Heart left ventricle (tissue), 16 donors: ENCODE measurements at regions of chr16 and their contacts with region 1.

Region 1: GRCh38 chr16:77963185-77964044 is 58.9 kb upstream of the CLEC3A start:
- DNase-seq: no peak
- ATAC-seq: no peak
- H3K4me3 ChIP-seq: no peak overlapping the region
- H3K27ac ChIP-seq: no peak overlapping the region
- H3K4me1 ChIP-seq: peaks cover 0 to 5% (median 0%) of the 10 kb centered on the region in 12 donors
- H3K27me3 ChIP-seq: peaks cover 0 to 21% (median 0%) of the 10 kb centered on the region in 9 donors
- CTCF ChIP-seq: no peak
- POLR2A ChIP-seq: no peak

Region 2: GRCh38 chr16:77788181-77789084 is 175.0 kb before region 1 on chr16 and contains the start of gene VAT1L:
- intact Hi-C with region 1: loop called in 2 of 10 experiments (anchors 10 kb)
- DNase-seq: peak in 3 of 5 donors; percentile 32 to 34 (median 33)
- ATAC-seq: peak; percentile 52 to 94 (median 88)
- H3K4me3 ChIP-seq: peak within 1 kb of the TSS; percentile 47 to 78 (median 62)
- H3K27ac ChIP-seq: peak within 1 kb of the TSS in 2 of 12 donors; percentile 9 to 22
- H3K4me1 ChIP-seq: peaks cover 0 to 25% (median 7%) of the 10 kb centered on the region in 12 donors
- H3K27me3 ChIP-seq: peaks cover 6 to 66% (median 13%) of the 10 kb centered on the region in 9 donors
- CTCF ChIP-seq: no peak
- POLR2A ChIP-seq: no peak
- total RNA-seq, gene VAT1L: 2.9 to 57.5 (median 14.3) TPM

Region 3: GRCh38 chr16:77801817-77802216 is 161.6 kb before region 1 on chr16:
- intact Hi-C with region 1: loop called in 2 of 10 experiments (anchors 5 to 10 kb)
- DNase-seq: no peak
- ATAC-seq: no peak
- H3K4me3 ChIP-seq: no peak overlapping the region
- H3K27ac ChIP-seq: no peak overlapping the region
- H3K4me1 ChIP-seq: peaks cover 0 to 5% (median 0%) of the 10 kb centered on the region in 12 donors
- H3K27me3 ChIP-seq: peaks cover 0 to 1% (median 0%) of the 10 kb centered on the region in 9 donors
- CTCF ChIP-seq: no peak
- POLR2A ChIP-seq: no peak

Region 4: DNA sequence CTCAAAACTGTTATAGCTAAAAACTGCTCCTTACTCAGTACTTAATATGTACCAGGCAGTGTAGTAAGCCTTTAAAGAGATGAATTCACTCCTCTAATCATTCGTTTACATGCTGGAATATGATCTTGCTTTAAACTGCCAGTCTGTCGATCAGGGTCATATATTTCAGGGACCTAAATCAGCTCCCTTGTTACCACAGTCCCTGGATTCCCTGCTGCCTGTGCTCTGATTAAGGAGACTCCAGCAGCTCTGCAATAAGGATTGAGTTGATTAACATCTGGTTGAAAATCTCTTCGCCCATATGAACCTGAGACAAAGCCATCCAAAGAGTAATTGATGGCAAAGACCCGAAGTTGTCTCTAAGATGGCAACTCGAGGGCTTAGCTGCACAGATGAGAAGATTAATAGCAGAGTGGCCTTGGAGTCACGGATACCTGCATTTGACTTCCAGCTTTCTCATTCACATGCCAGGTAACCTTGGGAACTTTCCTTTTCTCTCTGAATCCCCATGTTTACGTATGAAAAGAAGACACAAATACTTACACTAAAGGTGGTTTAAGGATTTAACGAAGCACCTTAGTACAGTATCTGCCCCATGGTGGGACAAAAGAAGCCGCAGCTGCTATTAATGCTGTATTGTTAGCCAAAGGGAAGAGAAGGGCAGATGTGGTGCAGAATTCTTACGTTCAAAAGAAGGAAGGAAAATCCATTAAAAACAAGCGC is 106.8 kb before region 1 on chr16:
- intact Hi-C with region 1: loop called in 2 of 10 experiments (anchors 2 to 5 kb)
- DNase-seq: no peak
- ATAC-seq: no peak
- H3K4me3 ChIP-seq: no peak overlapping the region
- H3K27ac ChIP-seq: no peak overlapping the region
- H3K4me1 ChIP-seq: peaks cover 0 to 25% (median 7%) of the 10 kb centered on the region in 12 donors
- H3K27me3 ChIP-seq: no peaks in the 10 kb centered on the region
- CTCF ChIP-seq: no peak
- POLR2A ChIP-seq: no peak

Region 5: DNA sequence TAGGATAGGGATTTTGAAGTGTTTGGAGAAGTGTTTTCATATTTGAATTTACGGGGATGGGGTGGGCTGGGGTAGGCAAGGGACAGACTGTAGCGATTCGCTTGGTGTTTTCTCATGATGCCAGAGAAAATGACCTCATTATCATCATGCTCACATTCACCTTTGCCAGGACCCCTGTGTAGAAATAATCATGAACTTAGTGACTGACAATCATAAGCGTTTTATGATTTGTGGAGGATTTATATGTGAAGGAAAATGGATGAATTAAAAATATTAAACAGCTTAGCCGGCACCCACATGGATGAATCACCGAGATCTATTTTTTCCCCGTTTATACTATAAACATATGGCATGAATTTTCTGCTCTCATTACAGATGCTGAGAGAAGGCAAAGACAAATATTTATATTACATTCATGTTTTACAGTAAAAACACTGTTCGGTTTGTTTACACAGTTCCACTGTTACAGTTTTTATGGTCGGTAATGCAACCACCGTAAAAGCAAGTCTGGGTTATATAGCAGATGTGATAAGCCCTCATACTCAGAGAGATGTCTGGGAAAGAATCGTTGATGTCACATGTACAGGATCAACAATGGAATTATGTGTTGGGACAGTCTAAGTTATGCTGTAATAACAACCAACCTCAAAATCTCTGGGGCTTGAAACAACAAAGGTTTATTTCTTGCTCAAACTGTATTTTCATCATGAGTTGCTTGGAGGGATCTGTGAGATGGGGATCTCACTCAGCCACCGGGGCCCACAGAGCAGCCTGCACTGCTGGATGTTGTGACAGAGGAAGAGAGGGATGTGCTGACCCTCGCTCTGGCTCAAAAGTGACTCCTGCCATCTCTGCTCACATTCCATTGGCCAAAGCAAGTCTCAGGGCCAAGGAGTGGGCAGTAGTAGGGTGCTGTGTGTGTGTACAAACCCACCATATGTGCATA is 221.1 kb after region 1 on chr16:
- intact Hi-C with region 1: no loop called
- DNase-seq: no peak
- ATAC-seq: no peak
- H3K4me3 ChIP-seq: no peak overlapping the region
- H3K27ac ChIP-seq: no peak overlapping the region
- H3K4me1 ChIP-seq: no peaks in the 10 kb centered on the region
- H3K27me3 ChIP-seq: no peaks in the 10 kb centered on the region
- CTCF ChIP-seq: no peak
- POLR2A ChIP-seq: no peak